MCF 10A (cell line): ENCODE measurements at regions of chr5 and their contacts with region 1.

Region 1: GRCh38 chr5:119267958-119268386 is 87.8 kb upstream of the TNFAIP8 start:
- DNase-seq: peak; percentile 99
- H3K4me3 Mint-ChIP-seq: peak overlapping the region; percentile 86
- H3K27ac Mint-ChIP-seq: peak overlapping the region; percentile 81
- H3K4me1 Mint-ChIP-seq: peaks cover 17% of the 10 kb centered on the region
- H3K27me3 Mint-ChIP-seq: no peaks in the 10 kb centered on the region
- CTCF ChIP-seq: peak; percentile 55

Region 2: GRCh38 chr5:119022017-119022745 is 245.8 kb before region 1 on chr5:
- CTCF ChIA-PET with region 1: no interaction called
- POLR2A ChIA-PET with region 1: interaction called, 4 read pairs
- intact Hi-C with region 1: loop called (anchors 10 kb)
- DNase-seq: peak; percentile 57
- H3K4me3 Mint-ChIP-seq: no peak overlapping the region
- H3K27ac Mint-ChIP-seq: no peak overlapping the region
- H3K4me1 Mint-ChIP-seq: peaks cover 6% of the 10 kb centered on the region
- H3K27me3 Mint-ChIP-seq: no peaks in the 10 kb centered on the region
- CTCF ChIP-seq: peak; percentile 61

Region 3: GRCh38 chr5:119290161-119290569 is 22.2 kb after region 1 on chr5:
- CTCF ChIA-PET with region 1: interaction called, 8 read pairs
- POLR2A ChIA-PET with region 1: interaction called, 48 read pairs
- intact Hi-C with region 1: no loop called
- DNase-seq: no peak
- H3K4me3 Mint-ChIP-seq: no peak overlapping the region
- H3K27ac Mint-ChIP-seq: no peak overlapping the region
- H3K4me1 Mint-ChIP-seq: peaks cover 42% of the 10 kb centered on the region
- H3K27me3 Mint-ChIP-seq: no peaks in the 10 kb centered on the region
- CTCF ChIP-seq: no peak

Region 4: GRCh38 chr5:119328753-119329602 is 61.0 kb after region 1 on chr5:
- CTCF ChIA-PET with region 1: interaction called, 100 read pairs
- POLR2A ChIA-PET with region 1: interaction called, 117 read pairs
- intact Hi-C with region 1: loop called (anchors 1 kb)
- DNase-seq: peak; percentile 54
- H3K4me3 Mint-ChIP-seq: no peak overlapping the region
- H3K27ac Mint-ChIP-seq: peak overlapping the region; percentile 65
- H3K4me1 Mint-ChIP-seq: peaks cover 55% of the 10 kb centered on the region
- H3K27me3 Mint-ChIP-seq: no peaks in the 10 kb centered on the region
- CTCF ChIP-seq: no peak

Region 5: DNA sequence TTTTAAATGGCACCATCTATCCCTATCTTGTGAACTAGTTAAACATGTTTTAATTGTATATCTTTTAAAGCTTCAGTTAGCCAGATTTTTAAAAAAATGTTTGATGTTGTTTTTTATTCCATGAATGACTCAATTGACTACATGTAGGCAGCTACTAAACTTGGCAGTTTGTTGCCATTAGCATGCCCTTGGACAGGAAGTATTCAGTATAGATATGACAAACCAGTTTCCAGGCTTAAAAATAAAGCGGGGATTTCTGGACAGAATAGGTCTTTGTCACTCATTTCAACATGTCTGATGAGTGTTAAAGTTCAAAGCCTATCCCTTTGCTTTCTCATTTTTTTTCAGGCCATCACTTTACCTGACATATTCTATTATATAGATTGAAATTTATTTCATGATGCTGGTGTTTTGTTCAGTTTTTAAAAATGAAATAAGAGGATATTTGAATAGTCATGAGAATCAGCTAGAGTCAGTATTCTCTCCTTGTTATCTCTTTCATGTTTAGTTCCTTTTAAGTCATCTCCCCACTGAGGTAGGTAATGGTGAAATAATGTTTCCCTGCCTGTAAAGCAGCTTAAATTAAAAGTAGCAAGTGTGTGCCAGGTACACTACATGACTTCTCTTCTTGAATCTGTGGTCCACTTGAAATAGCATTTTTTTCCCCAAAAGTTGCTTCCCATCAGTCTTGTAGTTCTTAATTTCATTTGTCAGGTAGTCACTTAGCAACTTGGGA is 99.7 kb after region 1 on chr5:
- CTCF ChIA-PET with region 1: interaction called, 6 read pairs
- POLR2A ChIA-PET with region 1: interaction called, 10 read pairs
- intact Hi-C with region 1: no loop called
- DNase-seq: peak; percentile 81
- H3K4me3 Mint-ChIP-seq: peak overlapping the region; percentile 45
- H3K27ac Mint-ChIP-seq: peak overlapping the region; percentile 90
- H3K4me1 Mint-ChIP-seq: peaks cover 47% of the 10 kb centered on the region
- H3K27me3 Mint-ChIP-seq: no peaks in the 10 kb centered on the region
- CTCF ChIP-seq: no peak